ENCODE measurements at regions of chr10 and their contacts with region 1.

Region 1: DNA sequence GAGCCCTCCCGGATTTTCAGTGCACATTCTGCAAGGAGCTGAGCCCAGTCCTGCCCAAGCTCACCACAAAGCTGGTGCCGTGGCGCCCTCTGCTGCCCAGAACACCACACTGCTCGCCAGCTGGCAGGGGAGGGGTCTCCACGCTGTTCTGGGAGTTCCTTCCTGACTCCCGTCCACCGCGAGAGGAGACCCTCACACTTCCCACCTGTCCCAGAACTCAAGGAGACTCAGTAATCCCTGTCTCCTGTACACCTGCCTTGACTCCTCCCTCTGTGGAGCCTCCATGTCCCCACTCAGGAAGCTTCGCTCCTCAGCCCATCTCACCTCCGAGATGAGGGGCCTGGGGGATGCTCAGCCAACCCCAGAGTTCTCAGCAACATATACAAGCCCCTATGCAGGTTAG is 11.3 kb downstream of the C10orf105 start:
- DNase-seq: peak; percentile 41 to 42
- ATAC-seq: peak; percentile 66 to 87
- H3K4me3 ChIP-seq: no peak overlapping the region
- H3K27ac ChIP-seq: peak overlapping the region in 1 of 2 experiments; percentile 52; a peak in 3 of 6 replicates
- H3K4me1 ChIP-seq: peaks cover 11% of the 10 kb centered on the region
- CTCF ChIP-seq: peak; percentile 74
- EP300 ChIP-seq: no peak
- POLR2A ChIP-seq: no peak
- RAD21 ChIP-seq: peak; percentile 79 to 83

Region 2: DNA sequence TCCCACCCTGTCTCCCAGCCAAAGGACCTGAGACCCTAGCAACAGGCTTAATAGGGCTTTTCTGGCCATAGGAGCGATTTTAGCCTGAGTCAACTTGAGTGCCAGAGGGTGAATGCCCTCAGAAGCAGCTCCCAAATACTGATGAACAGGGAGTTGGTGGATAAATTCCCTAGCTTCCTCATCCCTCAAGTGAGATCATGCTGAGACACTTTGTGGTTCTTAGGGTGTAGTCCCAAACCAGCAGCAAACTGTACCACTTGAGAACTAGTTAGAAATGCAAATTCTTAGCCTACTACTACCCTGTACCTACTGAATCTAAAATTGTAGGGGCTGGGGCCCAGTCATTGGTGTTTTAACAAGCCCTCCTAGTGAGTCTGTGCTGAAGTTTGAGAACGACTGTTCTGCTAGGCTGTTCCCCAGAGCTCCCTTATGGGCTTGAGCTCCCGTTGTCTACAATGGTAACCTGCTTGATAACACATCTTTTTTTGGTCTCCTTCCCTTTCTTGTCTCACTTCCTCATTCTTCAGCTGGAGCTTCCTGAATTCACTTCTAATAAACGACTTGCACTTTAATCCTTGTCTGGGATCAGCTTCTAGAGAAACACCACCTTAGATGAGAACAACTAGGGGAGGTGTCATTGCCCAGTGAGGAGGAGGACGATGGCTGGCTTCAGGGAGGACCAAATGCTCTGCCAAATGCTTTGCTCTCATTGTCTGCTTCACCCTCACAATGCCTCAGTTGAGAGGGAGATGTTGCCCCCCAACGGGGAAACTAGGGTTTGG is 329.8 kb before region 1 on chr10:
- CTCF ChIA-PET with region 1: interaction called, 17 read pairs
- POLR2A ChIA-PET with region 1: no interaction called
- DNase-seq: no peak
- ATAC-seq: no peak
- H3K4me3 ChIP-seq: no peak overlapping the region
- H3K27ac ChIP-seq: no peak overlapping the region
- H3K4me1 ChIP-seq: peaks cover 12% of the 10 kb centered on the region
- CTCF ChIP-seq: no peak
- EP300 ChIP-seq: no peak
- POLR2A ChIP-seq: no peak
- RAD21 ChIP-seq: no peak

Region 3: DNA sequence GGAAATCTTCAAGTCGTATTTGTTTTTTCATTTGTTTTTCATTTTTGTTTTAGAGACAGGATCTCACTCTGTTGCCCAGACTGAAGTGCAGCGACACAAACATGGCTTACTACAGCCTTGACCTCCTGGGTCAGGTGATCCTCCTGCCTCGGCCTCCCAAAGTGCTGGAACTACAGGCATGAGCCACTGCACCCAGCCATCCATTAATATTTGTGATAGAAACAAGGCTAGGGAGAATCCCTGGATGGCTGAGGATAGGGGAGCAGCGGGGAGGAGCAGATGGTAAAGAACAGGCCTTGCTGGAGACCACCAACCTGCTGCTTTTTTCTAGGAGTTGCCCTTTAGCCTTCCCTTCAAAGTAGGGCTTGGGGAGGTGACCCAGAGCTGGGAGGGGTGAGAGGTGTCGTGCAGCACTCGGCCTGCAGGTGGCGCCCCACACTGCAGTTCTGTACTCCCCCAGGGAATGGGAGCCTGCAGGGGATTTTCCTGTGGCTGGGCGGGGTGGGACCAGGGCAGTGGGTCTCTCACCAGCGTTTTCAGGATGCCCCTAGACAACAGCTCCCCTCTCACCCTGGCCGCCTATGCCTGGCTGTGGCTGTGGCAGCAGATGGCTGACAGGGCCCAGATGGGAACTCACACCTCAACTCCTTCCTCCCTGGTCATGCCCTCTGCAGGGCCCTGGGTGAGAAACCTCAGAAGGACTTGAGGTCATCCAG is 324.2 kb before region 1 on chr10:
- CTCF ChIA-PET with region 1: interaction called, 32 read pairs
- POLR2A ChIA-PET with region 1: no interaction called
- DNase-seq: peak; percentile 58 to 78
- ATAC-seq: peak; percentile 91 to 98
- H3K4me3 ChIP-seq: no peak overlapping the region
- H3K27ac ChIP-seq: no peak overlapping the region
- H3K4me1 ChIP-seq: no peaks in the 10 kb centered on the region
- CTCF ChIP-seq: peak; percentile 86
- EP300 ChIP-seq: no peak
- POLR2A ChIP-seq: no peak
- RAD21 ChIP-seq: peak; percentile 85 to 89

Region 4: DNA sequence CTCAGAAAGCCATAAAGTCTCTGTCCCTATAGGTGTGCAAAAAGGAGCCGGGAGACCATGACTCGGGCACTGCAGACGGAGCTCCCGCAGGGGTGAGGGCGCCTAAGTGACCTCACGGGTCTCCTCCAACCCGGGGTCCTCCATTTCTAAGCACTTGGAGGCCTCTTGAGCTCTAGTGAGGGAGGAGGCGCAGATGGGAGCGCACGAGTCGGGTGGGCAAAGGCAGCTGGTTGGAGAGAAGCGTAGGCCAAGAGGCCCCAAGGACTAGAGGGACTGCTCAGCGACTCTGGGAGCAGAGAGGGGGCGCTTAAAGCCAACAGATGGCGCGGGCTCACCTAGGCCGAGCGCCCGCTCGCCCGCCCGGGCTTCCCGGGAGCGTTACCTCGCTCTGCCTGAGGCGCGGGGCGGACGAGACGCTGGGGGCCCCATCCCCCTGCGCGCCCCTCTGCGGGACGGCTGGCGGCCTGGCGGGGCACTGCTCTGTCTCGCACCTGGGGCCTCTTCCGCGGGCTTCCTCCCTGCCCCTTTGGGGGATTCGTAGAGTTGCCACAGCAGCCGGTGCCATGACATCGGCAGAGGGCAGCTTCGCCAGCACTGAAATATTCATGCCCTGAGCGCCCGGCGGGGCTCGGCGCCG is 312.1 kb before region 1 on chr10:
- CTCF ChIA-PET with region 1: interaction called, 41 read pairs
- POLR2A ChIA-PET with region 1: no interaction called
- DNase-seq: peak; percentile 75 to 76
- ATAC-seq: peak; percentile 86 to 94
- H3K4me3 ChIP-seq: peak overlapping the region; percentile 58
- H3K27ac ChIP-seq: peak overlapping the region; percentile 71 to 91
- H3K4me1 ChIP-seq: peaks cover 7% of the 10 kb centered on the region; the same call in 1 of the 3 replicates
- CTCF ChIP-seq: peak; percentile 77
- EP300 ChIP-seq: no peak
- POLR2A ChIP-seq: no peak
- RAD21 ChIP-seq: peak; percentile 80 to 92

Region 5: GRCh38 chr10:71631007-71631859 is 77.1 kb before region 1 on chr10:
- CTCF ChIA-PET with region 1: no interaction called
- POLR2A ChIA-PET with region 1: no interaction called
- DNase-seq: no peak
- ATAC-seq: no peak
- H3K4me3 ChIP-seq: no peak overlapping the region
- H3K27ac ChIP-seq: no peak overlapping the region
- H3K4me1 ChIP-seq: no peaks in the 10 kb centered on the region
- CTCF ChIP-seq: no peak
- EP300 ChIP-seq: no peak
- POLR2A ChIP-seq: no peak
- RAD21 ChIP-seq: no peak

Region 6: DNA sequence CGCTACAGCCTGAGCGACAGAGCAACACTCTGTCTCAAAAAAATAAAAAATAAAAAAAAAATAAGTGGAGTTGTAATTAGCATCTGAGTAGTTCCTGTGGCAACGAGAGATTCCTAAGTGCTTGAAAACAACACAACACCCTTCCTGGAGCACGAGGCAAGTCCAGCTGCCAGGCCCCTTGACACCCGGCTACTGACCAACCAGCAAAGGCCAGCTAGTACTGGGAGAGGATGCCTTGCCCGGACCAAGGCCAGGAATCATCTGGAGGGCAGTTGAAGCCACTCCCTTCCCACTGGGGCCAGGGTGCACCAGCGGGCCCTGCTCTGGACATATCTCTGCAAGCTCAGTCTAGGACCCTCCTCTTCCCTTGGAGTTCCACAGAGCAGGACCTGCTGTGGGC is 10.7 kb after region 1 on chr10:
- CTCF ChIA-PET with region 1: interaction called, 42 read pairs
- POLR2A ChIA-PET with region 1: no interaction called
- DNase-seq: no peak
- ATAC-seq: no peak
- H3K4me3 ChIP-seq: no peak overlapping the region
- H3K27ac ChIP-seq: no peak overlapping the region
- H3K4me1 ChIP-seq: peaks cover 3% of the 10 kb centered on the region
- CTCF ChIP-seq: no peak
- EP300 ChIP-seq: no peak
- POLR2A ChIP-seq: no peak
- RAD21 ChIP-seq: no peak

Region 7: DNA sequence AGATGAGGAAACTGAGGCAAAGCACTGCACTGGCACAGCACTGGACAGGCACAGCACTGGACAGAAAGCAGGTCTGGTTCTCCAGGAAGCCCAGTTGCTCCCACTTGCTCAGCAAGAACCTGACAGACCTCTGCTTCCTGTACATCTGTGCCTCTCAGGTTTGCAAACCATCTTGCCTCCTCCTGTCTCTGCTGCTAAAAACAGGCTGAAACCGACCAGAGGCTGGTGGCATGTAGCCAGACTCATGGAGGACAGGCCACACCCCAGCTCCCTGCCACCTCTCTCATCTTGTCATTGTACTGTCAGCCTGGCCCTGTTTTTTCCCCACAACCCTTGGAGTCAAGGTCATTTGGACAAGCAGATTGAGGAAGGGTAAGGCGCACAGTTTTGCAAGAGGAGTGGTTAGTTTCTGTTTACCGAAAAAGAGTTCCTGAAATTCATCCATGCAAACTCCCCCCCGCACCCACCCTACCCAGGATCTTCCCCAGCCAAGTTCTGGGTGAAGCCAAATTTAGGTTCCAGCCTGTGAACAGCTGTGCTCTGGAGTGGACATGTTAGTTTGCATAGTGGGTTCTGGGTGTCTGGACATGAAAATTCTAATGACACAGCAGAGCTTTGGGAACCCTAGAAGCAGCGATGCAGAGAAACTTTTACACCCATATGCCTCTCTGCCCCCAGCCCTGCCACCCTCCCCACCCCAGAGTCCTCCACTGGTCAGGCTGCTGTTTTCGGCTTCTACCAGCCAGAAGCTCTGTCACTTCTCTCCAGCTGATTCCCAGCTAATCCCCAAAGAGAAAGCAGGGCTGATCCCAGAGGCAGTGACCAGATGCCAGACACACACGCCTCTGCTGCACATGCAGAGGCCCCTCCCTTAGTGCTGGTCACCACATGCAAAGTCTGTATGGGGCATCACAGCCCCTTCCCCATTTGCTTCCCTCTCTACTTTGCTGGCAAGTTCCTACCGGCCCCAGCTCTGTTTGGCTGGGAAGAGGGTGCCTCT is 19.7 kb after region 1 on chr10:
- CTCF ChIA-PET with region 1: interaction called, 24 read pairs
- POLR2A ChIA-PET with region 1: no interaction called
- DNase-seq: peak; percentile 19 to 42
- ATAC-seq: peak in 1 of 2 experiments; percentile 18; a peak in 2 of 6 replicates
- H3K4me3 ChIP-seq: no peak overlapping the region
- H3K27ac ChIP-seq: peak overlapping the region; percentile 38 to 79; a peak in 4 of 6 replicates
- H3K4me1 ChIP-seq: peaks cover 33% of the 10 kb centered on the region
- CTCF ChIP-seq: no peak
- EP300 ChIP-seq: no peak
- POLR2A ChIP-seq: no peak
- RAD21 ChIP-seq: no peak

Region 8: GRCh38 chr10:71766702-71767419 is 58.6 kb after region 1 on chr10:
- CTCF ChIA-PET with region 1: interaction called, 18 read pairs
- POLR2A ChIA-PET with region 1: interaction called, 3 read pairs
- DNase-seq: peak; percentile 85 to 98
- ATAC-seq: peak; percentile 81 to 88
- H3K4me3 ChIP-seq: no peak overlapping the region
- H3K27ac ChIP-seq: peak overlapping the region; percentile 98 to 99
- H3K4me1 ChIP-seq: peaks cover 89% of the 10 kb centered on the region
- CTCF ChIP-seq: no peak
- EP300 ChIP-seq: peak; percentile 75 to 87; a peak in 3 of 5 replicates
- POLR2A ChIP-seq: no peak
- RAD21 ChIP-seq: peak; percentile 0 to 16; a peak in 2 of 5 replicates